Head of caudate nucleus (tissue), 42 donors: ENCODE measurements at regions of chr3 and their contacts with region 1.

Region 1: DNA sequence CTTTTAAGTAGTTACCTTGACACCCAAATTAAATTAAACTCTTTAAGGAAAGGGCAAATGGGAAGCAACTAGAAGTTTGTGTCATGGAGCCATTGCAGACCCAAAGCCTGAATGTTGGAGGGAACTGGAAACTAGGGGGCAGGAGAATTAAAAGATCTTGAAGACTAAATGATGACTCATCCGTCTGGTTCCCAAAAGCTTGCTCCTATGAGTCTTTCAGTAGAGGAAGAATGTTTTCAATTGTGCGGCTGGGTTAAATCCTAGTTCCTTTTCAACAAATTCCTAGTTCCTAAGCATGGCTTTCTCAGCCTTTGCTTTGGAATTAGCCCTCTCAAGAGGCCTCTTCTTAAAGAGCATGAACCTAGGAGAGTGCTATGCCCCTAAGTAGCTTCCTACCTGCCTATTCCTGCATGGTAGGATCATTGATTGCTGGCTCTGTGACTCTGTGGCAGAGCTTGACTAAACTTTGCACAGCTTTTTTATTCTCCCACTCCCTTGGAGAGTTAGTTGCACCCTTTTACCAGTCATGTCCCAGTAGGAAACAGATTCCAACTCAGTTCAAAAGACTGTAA is 17.7 kb downstream of the CLEC3B start:
- DNase-seq: peak in 5 of 42 donors; percentile 33 to 73 (median 49)

Region 2: GRCh38 chr3:44825264-44825925 is 218.4 kb before region 1 on chr3:
- intact Hi-C with region 1: no loop called
- DNase-seq: no peak

Region 3: DNA sequence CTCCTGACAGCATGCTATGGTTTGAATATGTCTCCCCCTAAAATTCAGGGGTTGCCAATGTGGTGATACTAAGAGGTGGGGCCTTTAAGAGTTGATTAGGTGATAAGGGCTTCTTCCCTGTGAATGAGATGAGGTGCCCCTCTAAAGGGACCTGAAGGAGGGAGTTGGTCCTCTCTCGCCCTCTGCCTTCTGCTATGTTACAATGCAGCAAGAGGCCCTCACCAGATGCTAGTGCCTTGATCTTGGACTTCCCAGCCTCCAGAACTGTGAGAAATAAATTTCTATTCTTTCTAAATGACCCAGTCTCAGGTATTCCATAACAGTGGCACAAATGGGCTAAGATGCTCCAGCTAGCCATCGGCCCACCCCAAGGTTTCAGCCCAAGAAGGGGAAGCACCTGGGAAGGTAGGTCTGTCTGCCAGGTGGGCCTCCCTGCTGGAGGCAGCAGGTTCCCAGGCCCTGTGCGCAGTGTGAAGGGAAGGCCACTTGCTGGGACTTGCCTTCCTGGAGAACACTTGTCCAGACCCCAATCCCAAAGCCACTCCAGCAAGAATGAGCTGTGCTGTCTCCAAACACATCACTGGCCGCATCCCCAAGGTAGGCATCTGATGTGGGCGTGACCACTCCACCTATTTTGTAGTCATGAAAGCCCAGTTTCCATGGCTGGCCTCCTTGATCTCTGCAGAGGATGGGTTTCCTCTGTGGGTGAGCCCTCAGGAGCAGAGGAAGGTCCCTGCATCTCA is 160.4 kb before region 1 on chr3:
- intact Hi-C with region 1: no loop called
- DNase-seq: no peak

Region 4: DNA sequence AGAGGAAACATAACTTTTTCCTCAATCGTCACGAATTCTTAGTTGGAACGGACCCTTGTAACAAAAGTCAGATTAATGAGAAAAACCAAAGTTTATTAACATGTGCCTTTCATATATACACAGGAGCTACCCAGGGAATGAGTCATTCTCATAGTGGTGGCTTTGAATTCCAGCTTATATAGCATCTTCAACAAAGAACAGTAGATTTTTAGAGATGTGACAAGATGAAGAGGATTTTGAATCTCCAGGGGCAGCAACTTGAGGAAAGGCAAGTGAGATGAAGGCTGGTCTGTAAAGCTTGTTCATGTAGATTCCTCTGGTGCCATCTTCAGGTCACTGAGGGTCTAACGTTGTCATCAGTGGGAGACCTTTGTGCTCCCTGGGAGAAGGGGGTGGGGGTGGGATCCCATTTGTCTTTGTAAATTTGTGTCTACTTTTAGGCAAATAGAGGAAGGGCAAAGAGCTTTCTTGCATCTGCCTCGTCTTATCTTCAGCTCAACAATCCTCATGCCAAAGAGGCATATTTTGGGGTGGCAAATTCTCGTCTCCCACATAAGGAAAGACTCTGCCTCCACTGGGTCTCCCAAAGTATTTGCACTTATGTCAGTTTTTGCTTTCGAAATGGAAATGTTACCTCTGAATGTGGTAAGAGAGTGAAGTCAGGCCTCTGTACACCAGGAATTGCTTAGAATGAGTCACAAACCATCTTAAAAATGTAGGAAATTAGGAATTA is 11.8 kb after region 1 on chr3:
- intact Hi-C with region 1: no loop called
- DNase-seq: no peak

Region 5: DNA sequence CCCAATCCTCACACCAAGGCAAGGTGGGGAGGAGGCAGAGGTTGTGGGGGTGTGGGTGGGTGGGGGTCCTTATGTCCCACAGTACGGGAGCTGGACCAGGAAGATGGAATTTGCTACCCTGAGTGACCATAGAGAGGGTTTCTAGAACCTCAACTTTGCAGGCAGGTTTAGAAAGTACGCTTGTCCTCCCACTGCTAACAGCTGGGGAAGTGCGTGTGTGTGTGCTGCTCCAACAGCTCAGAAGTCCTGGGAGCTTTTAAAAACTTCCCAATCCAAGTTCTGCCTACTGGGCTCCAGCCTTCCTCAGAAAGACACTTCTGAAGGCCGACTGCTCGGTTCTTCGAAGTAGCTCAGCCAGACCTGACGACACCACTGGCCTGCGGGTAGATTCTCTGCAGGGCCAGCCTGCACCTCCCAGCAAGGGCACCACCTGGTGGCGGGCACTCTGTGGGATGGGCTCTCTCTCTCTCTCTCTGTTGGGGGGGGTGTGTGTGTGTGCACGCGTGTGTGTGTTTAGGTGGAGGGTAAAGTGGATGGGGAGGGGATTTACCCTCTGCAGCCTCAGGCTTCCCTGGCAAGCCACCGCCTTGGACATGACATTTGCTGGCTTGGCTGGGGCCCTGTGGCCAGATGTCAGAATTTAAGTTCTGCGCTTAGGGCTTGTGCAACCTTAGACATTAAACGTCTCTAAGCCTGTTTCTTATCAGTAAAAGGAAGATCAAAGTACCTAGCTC is 166.7 kb after region 1 on chr3:
- intact Hi-C with region 1: loop called (anchors 5 kb)
- DNase-seq: peak; percentile 33 to 87 (median 72)